Posterior cingulate gyrus (tissue), 11 donors: ENCODE measurements at regions of chr4 and their contacts with region 1.

Region 1: DNA sequence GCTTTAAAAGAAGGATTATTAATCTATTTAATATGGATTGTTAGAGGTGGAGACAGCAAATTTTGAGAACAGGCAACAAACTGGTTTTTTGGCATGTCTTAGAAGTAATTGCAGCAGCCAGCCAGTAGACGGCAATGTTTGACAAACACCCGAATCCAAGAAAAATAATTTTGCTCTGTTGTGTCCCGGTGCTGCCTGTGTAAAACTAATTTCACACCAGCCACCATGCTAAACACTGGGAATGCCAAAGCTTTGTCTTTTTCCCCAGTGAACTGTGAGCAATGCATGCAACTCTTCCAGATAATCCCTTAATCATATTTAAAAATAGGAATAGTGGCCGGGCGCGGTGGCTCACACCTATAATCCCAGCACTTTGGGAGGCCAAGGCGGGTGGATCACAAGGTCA is 25.9 kb downstream of the SMIM31 start:
- DNase-seq: peak in 4 of 10 donors; percentile 30 to 44 (median 38)

Region 2: GRCh38 chr4:164956766-164957643 is 177.2 kb after region 1 on chr4:
- intact Hi-C with region 1: loop called (anchors 10 kb)
- DNase-seq: peak; percentile 75 to 98 (median 90)

Region 3: GRCh38 chr4:164977243-164978164 is 197.7 kb after region 1 on chr4 and contains the start of gene TRIM61:
- intact Hi-C with region 1: no loop called
- DNase-seq: peak; percentile 23 to 95 (median 54)